GM12878 (cell line): ENCODE measurements at regions of chr11 and their contacts with region 1.

Region 1: GRCh38 chr11:57456960-57457642 is 3.2 kb upstream of the RTN4RL2 start:
- DNase-seq: no peak
- ATAC-seq: peak; percentile 82
- H3K4me3 ChIP-seq: no peak overlapping the region
- H3K27ac ChIP-seq: no peak overlapping the region
- H3K4me1 ChIP-seq: peaks cover 20% of the 10 kb centered on the region
- H3K27me3 ChIP-seq: peaks cover 5% of the 10 kb centered on the region in 2 experiments
- CTCF ChIP-seq: peak; percentile 94 to 100 (median 98); a peak in 5 of 6 replicates
- EP300 ChIP-seq: no peak
- POLR2A ChIP-seq: no peak
- RAD21 ChIP-seq: peak; percentile 90

Region 2: GRCh38 chr11:57237204-57237681 is 219.9 kb before region 1 on chr11 and contains the start of gene APLNR:
- CTCF ChIA-PET with region 1: no interaction called
- POLR2A ChIA-PET with region 1: no interaction called
- RAD21 ChIA-PET with region 1: no interaction called
- SMC1A ChIA-PET with region 1: no interaction called
- in situ Hi-C with region 1: no loop called
- intact Hi-C with region 1: no loop called
- DNase-seq: no peak
- ATAC-seq: no peak
- H3K4me3 ChIP-seq: no peak within 1 kb of the TSS
- H3K27ac ChIP-seq: no peak within 1 kb of the TSS
- H3K4me1 ChIP-seq: no peaks in the 10 kb centered on the region
- H3K27me3 ChIP-seq: peaks cover 0 to 2% of the 10 kb centered on the region in 2 experiments; a peak in 3 of 4 replicates
- CTCF ChIP-seq: no peak
- EP300 ChIP-seq: no peak
- POLR2A ChIP-seq: no peak
- RAD21 ChIP-seq: no peak
- polyA plus RNA-seq, gene APLNR: not detected

Region 3: DNA sequence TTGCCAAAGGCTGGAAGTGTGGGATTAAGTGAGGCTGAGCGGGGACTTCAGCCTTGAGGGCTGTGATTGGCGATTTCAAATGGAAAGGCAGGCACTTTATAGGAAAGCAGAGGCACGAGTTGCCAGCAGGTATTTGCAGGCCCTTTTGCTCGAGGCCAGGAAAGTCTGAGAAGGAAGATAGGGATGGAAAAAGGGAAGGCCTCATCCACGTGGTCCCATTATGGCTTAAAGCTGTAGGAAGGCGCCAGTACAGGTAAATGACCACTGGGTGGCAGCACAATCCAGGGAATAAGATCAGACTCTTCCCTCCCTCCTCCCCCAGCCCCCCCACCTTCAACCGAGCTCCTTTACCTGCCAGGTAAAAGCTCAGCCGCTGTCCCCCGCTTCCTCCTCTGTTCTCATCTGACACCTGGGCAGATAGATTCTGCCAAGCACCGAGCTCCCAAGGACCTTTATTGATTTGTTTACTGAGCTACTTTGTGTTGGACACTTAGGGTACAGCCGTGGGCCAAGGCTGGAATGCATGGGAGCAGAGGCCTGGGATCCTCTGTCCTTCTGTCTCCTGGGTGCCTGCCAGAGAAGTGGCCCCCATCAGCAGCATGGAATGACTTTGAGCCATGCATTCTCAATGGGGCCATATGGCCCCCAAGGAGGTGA is 111.4 kb before region 1 on chr11:
- CTCF ChIA-PET with region 1: interaction called, 33 read pairs
- POLR2A ChIA-PET with region 1: interaction called, 4 read pairs
- RAD21 ChIA-PET with region 1: interaction called, 23 read pairs
- SMC1A ChIA-PET with region 1: interaction called, 10 read pairs
- in situ Hi-C with region 1: no loop called
- intact Hi-C with region 1: loop called (anchors 1 kb)
- DNase-seq: no peak
- ATAC-seq: peak; percentile 83
- H3K4me3 ChIP-seq: no peak overlapping the region
- H3K27ac ChIP-seq: no peak overlapping the region
- H3K4me1 ChIP-seq: no peaks in the 10 kb centered on the region; the same call in 1 of the 2 replicates
- H3K27me3 ChIP-seq: peaks cover 0 to 4% of the 10 kb centered on the region in 2 experiments; a peak in 1 of 4 replicates
- CTCF ChIP-seq: peak; percentile 66 to 77 (median 75); a peak in 5 of 6 replicates
- EP300 ChIP-seq: no peak
- POLR2A ChIP-seq: no peak
- RAD21 ChIP-seq: peak; percentile 76

Region 4: GRCh38 chr11:57432714-57433163 is 24.4 kb before region 1 on chr11:
- CTCF ChIA-PET with region 1: interaction called, 40 read pairs
- POLR2A ChIA-PET with region 1: interaction called, 3 read pairs
- RAD21 ChIA-PET with region 1: interaction called, 4 read pairs
- SMC1A ChIA-PET with region 1: interaction called, 4 read pairs
- in situ Hi-C with region 1: no loop called
- intact Hi-C with region 1: no loop called
- DNase-seq: no peak
- ATAC-seq: peak; percentile 74
- H3K4me3 ChIP-seq: no peak overlapping the region
- H3K27ac ChIP-seq: no peak overlapping the region
- H3K4me1 ChIP-seq: peaks cover 6% of the 10 kb centered on the region
- H3K27me3 ChIP-seq: no peaks in the 10 kb centered on the region
- CTCF ChIP-seq: no peak
- EP300 ChIP-seq: no peak
- POLR2A ChIP-seq: no peak
- RAD21 ChIP-seq: no peak

Region 5: DNA sequence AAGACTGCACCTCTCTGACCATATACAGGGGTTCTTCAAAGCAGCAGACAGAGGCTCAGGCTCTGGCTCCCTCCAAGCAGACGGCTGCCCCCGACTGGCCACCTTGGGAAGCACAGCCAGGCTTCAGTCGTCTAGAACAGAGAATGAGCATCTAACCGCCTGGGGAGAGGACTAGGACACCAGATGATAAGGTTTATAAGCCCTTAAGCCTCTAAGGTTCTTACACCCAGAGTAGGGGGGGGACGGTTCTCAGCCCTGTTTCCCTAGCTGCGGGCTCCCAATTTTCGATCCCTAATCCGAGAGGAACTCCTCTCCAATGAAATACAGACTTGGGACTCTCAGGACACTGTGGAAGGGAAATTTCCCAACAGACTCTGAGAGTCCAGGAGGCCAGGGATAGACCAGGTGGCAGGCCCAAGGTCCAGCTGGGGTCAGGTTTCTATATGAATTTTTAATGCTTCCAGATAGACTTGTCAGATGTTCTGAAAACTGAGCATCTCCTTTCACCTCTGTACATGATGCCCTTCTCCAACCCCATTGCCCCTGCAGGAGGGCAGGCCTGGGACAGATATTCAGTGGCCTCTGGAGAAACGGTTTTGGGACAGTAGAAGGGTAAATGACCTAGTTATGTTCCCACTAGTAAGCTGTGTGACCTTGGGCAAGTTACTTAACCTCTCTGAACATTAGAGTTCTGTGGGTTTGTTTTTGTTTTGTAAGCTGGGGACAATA is 23.5 kb after region 1 on chr11:
- CTCF ChIA-PET with region 1: interaction called, 321 read pairs
- POLR2A ChIA-PET with region 1: interaction called, 4 read pairs
- RAD21 ChIA-PET with region 1: interaction called, 79 read pairs
- SMC1A ChIA-PET with region 1: interaction called, 95 read pairs
- in situ Hi-C with region 1: no loop called
- intact Hi-C with region 1: loop called (anchors 1 kb)
- DNase-seq: no peak
- ATAC-seq: peak; percentile 48
- H3K4me3 ChIP-seq: no peak overlapping the region
- H3K27ac ChIP-seq: no peak overlapping the region
- H3K4me1 ChIP-seq: peaks cover 26% of the 10 kb centered on the region
- H3K27me3 ChIP-seq: no peaks in the 10 kb centered on the region
- CTCF ChIP-seq: peak; percentile 71 to 91 (median 86)
- EP300 ChIP-seq: no peak
- POLR2A ChIP-seq: no peak
- RAD21 ChIP-seq: peak; percentile 59

Region 6: DNA sequence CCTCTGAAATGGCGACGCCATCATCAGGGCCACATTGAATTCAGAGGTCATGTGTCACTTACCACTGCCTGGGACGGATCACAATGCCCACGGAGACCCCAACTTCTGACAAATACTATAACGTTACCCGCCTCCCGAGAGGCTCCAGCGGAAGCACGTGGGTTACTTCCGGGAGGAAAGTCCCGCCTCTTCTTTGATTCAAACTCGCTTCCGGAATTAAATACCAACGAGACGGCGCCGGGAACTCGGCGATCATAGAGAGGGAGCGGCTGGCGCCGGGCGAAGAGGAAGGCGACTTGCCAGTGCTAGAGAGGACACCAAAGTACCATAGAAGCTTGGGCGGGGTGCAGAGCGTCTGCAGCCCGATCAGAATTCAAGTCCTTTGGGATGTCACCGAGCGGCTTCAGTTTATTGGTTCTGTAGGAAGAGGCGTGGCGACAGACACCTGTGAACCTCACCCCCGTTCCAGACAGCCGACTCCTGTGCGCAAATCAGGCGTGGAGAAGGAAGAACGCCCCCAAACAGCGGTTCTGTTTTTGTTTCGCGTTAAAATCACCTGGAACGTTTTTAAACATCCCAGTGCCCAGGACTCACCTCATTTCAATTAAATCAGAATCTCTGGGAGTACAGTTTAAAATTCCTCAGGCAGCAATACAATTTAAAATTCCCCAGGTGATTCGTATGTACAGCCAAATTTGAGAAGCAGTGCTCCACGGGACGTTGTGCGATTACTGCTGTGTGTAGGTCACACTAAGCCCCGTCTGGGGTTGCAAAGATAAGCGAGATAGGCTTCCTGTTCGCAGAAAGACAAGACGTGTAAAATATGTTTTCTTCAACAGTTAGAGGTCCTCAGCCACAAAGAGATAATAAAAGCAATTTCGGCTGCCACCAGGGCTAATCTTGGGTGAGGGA is 73.8 kb after region 1 on chr11 and contains the start of gene TIMM10:
- CTCF ChIA-PET with region 1: interaction called, 145 read pairs
- POLR2A ChIA-PET with region 1: no interaction called
- RAD21 ChIA-PET with region 1: interaction called, 48 read pairs
- SMC1A ChIA-PET with region 1: interaction called, 53 read pairs
- in situ Hi-C with region 1: no loop called
- intact Hi-C with region 1: loop called (anchors 1 kb)
- DNase-seq: peak; percentile 95
- ATAC-seq: peak; percentile 97
- H3K4me3 ChIP-seq: peak within 1 kb of the TSS; percentile 85
- H3K27ac ChIP-seq: peak within 1 kb of the TSS; percentile 88
- H3K4me1 ChIP-seq: peaks cover 16% of the 10 kb centered on the region
- H3K27me3 ChIP-seq: no peaks in the 10 kb centered on the region
- CTCF ChIP-seq: no peak
- EP300 ChIP-seq: peak; percentile 21 to 35; a peak in 2 of 4 replicates
- POLR2A ChIP-seq: peak; percentile 79
- RAD21 ChIP-seq: no peak
- polyA plus RNA-seq, gene TIMM10: 770 to 898 TPM

Region 7: DNA sequence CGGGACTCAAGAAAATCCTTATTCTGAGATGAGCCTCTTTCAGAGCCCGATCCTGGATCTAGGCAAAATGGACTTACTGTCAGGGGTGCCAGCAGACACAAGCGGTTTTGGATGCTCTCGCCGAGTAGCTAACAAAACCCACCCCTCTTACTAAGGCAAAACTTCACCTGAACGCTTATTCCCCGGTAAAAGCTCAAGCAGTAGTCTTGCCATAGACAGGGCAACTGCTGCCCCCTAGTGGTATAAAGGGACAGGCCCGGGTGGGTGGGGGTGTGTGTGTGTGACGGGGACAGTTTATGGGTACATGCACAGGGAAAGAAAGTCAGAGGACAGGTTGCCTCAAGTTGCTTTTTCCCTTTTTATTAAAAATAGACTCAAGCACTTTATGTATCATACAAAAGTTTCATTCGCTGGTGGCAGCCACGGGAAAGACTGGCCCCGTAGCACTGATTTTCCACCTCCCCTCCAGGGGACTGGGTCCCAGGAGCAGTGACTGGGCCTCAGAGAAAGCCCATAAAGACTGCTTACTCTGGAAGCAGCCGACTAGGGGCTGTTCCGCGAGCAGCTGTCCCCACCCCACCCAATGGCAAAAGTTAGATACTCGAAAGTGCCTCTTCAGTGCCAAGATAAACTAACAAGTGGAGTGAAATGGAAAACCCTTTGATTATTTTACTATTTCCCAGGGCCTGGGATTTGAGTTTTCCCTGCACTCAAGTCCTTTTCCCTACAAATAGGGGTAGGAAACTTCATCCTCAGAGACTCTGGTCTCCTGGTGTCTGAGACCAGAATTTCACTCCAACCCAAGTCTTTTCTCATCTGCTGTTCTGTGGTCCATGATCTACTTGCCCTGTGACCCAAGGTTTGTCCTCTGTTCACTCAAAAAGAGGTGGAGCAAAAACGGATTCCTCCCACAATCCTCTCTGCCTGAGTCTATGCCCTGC is 187.9 kb after region 1 on chr11:
- CTCF ChIA-PET with region 1: interaction called, 106 read pairs
- POLR2A ChIA-PET with region 1: no interaction called
- RAD21 ChIA-PET with region 1: interaction called, 13 read pairs
- SMC1A ChIA-PET with region 1: interaction called, 45 read pairs
- in situ Hi-C with region 1: no loop called
- intact Hi-C with region 1: no loop called
- DNase-seq: no peak
- ATAC-seq: peak; percentile 85
- H3K4me3 ChIP-seq: no peak overlapping the region
- H3K27ac ChIP-seq: no peak overlapping the region
- H3K4me1 ChIP-seq: peaks cover 12% of the 10 kb centered on the region
- H3K27me3 ChIP-seq: peaks cover 10 to 17% of the 10 kb centered on the region in 2 experiments
- CTCF ChIP-seq: peak; percentile 73 to 85 (median 85)
- EP300 ChIP-seq: no peak
- POLR2A ChIP-seq: no peak
- RAD21 ChIP-seq: peak; percentile 93